Motor neuron (in vitro differentiated cells): ENCODE measurements at regions of chr15 and their contacts with region 1.

Region 1: DNA sequence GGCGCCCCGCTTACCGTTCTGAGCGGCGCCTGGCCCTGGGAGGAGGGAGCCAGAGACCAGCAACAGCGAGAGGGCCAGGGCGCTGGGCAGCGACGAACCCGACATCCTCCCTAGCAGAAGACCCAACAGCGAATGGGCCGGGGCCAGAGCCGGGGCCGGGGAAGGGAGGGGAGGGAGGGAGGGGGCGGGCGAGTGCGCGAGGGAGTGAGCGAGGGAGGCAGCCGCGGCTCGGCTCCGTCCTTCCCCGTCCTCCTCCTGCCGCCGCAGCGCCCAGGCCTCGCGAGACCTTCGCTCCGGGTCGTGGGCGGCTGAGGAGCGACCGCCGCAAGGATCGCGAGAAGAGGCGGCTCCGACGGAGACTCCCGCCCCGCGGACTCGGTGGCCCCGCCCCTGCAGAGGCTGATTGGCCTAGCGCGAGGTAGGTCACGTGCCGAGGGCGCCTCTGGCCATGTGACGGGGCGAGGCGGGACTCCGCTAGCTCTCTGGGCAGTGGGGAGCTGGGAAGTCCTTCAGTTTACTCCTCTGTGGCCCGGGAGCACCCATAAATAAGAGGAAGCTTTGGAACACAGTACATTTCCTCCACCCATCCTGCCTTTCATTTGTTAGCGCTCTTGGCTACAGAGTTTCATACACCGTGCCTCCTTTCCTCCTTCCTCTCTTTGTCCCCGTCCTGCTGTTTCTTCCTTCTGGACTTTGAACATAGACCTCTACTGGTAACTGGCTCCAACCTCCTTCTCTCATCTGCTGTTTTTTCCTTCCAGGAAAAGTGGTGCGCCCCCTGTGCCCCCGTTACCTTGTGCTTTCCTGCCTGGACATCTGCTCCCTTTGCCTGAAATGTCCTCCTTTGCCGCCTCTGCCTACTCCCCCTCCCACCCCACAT is at the start of gene NPTN:
- ATAC-seq: peak; percentile 81 to 96 (median 94)
- H3K4me3 ChIP-seq: peak within 1 kb of the TSS; percentile 82 to 98 (median 86)
- H3K27ac ChIP-seq: peak within 1 kb of the TSS; percentile 87 to 92
- H3K4me1 ChIP-seq: peaks cover 17 to 35% of the 10 kb centered on the region in 2 donors
- total RNA-seq, gene NPTN: 41.8 to 134 (median 70.4) TPM

Region 2: DNA sequence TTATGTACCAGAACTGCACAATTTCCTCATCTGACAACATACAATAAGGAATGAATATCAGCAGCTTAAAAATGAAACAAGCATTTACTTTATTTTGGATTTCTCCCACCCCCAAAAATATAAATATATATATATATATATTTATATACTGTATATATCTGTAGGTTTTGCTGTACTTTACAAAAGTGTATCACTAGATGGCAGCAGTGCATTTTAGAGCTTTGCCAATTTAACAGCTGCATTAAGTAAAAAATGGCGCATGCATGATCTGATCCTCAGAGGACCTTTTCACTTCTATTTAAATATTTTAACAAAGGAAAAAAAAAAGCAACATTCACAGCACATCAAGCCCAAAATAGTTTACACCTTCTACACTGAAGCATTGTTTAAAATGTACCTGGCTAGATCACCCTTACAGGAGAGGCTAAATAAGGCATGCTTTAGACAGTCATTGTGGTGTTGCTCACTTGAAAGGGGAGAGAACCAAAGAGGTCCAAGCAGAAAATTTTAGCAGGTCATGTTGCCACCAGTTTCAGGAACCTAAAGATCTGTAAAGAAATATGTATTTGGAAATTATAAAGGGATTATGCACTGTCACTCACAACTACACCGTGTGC is 72.7 kb before region 1 on chr15:
- in situ Hi-C with region 1: loop called in 1 of 9 experiments (anchors 10 kb)
- ATAC-seq: peak in 7 of 8 experiments; percentile 38 to 78 (median 61)
- H3K4me3 ChIP-seq: no peak overlapping the region
- H3K27ac ChIP-seq: no peak overlapping the region
- H3K4me1 ChIP-seq: peaks cover 0 to 8% of the 10 kb centered on the region in 2 donors

Region 3: GRCh38 chr15:74019734-74020133 is 386.4 kb after region 1 on chr15:
- in situ Hi-C with region 1: no loop called
- ATAC-seq: peak in 2 of 8 experiments; percentile 50
- H3K4me3 ChIP-seq: no peak overlapping the region
- H3K27ac ChIP-seq: no peak overlapping the region
- H3K4me1 ChIP-seq: no peaks in the 10 kb centered on the region